IMR-90 (cell line): ENCODE measurements at regions of chr12 and their contacts with region 1.

Region 1: DNA sequence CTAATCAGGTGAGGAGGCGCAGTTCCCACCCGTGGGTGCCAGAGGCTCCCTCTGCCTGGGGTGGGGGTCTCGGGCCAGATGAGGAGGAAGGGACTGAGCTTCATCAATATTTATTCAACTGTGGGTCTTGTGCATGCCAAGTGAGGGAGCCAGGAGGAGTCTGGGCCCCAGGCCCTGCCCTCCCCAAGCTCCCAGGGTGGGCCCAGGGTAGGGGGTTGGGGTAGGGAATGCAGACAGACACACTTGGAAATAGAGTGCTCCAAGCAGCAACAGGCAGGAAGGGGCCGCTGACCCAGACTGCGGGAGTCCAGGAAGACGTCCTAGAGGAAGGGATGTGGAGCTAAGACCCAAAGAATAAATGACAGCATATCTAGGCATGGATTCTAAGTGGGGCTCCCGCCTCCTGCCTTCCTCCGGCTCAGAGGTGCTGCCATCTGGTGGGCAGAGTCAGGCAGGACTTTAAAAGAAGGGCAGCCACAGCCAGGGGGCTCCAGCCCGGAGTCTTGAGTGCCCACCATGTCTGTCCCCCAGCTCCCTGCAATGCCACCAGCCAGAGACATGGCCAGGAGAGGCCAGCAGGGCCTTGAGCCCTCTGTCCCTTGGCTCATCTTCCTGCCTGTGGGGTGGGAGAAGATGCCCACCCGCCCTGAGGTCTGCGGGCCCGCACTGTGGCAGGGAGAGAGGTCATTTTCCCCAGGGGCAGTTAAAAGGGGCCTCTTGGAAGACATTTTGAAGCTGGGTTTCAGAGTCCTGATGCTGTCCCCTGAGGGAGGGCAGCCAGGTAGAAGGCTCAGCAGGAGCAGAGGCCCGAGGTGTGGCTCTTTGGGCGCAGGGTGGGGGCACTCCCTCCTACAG is 70.1 kb downstream of the PHETA1 start:
- DNase-seq: peak; percentile 31
- ATAC-seq: peak; percentile 92
- H3K4me3 ChIP-seq: no peak overlapping the region
- H3K27ac ChIP-seq: no peak overlapping the region
- H3K4me1 ChIP-seq: no peaks in the 10 kb centered on the region
- H3K27me3 ChIP-seq: peaks cover 1% of the 10 kb centered on the region; the same call in 1 of the 2 replicates
- CTCF ChIP-seq: peak; percentile 81
- POLR2A ChIP-seq: no peak
- RAD21 ChIP-seq: peak; percentile 58

Region 2: GRCh38 chr12:110896559-110896958 is 402.2 kb before region 1 on chr12:
- CTCF ChIA-PET with region 1: interaction called, 4 read pairs
- POLR2A ChIA-PET with region 1: no interaction called
- dilution Hi-C with region 1: no loop called
- in situ Hi-C with region 1: no loop called
- intact Hi-C with region 1: loop called (anchors 5 kb)
- DNase-seq: no peak
- ATAC-seq: no peak
- H3K4me3 ChIP-seq: no peak overlapping the region
- H3K27ac ChIP-seq: no peak overlapping the region
- H3K4me1 ChIP-seq: no peaks in the 10 kb centered on the region
- H3K27me3 ChIP-seq: peaks cover 3% of the 10 kb centered on the region; the same call in 1 of the 2 replicates
- CTCF ChIP-seq: no peak
- POLR2A ChIP-seq: no peak
- RAD21 ChIP-seq: no peak

Region 3: DNA sequence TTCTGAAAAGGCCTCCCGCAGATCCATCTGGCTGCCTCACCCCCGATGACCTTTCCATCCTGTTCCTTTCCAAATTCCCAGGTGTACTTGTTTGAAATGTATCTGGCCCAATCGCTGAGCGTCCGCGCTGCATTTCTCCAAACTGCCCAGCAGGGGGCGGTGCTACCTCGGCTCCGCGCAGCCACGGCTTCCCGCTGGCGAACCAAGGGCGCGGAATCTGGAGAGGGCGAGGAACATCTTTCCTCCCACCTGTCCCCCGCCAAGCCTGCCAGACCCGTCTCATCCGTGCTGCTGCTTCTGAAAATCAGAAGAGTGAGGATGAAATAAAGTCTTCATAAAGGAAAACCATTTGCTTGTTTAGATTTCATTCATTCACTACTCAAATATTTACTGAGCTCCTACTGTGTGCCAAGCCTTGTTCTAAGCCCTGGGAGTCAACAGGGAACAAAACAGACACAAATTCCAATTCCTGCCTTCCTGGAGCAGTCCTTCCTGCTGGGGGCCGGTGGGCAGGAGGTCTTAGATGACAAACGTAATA is 361.6 kb before region 1 on chr12:
- CTCF ChIA-PET with region 1: interaction called, 3 read pairs
- POLR2A ChIA-PET with region 1: no interaction called
- dilution Hi-C with region 1: no loop called
- in situ Hi-C with region 1: no loop called
- intact Hi-C with region 1: loop called (anchors 1 kb)
- DNase-seq: peak; percentile 23
- ATAC-seq: peak; percentile 89
- H3K4me3 ChIP-seq: no peak overlapping the region
- H3K27ac ChIP-seq: no peak overlapping the region
- H3K4me1 ChIP-seq: no peaks in the 10 kb centered on the region
- H3K27me3 ChIP-seq: peaks cover 4% of the 10 kb centered on the region
- CTCF ChIP-seq: peak; percentile 78
- POLR2A ChIP-seq: no peak
- RAD21 ChIP-seq: peak; percentile 75

Region 4: DNA sequence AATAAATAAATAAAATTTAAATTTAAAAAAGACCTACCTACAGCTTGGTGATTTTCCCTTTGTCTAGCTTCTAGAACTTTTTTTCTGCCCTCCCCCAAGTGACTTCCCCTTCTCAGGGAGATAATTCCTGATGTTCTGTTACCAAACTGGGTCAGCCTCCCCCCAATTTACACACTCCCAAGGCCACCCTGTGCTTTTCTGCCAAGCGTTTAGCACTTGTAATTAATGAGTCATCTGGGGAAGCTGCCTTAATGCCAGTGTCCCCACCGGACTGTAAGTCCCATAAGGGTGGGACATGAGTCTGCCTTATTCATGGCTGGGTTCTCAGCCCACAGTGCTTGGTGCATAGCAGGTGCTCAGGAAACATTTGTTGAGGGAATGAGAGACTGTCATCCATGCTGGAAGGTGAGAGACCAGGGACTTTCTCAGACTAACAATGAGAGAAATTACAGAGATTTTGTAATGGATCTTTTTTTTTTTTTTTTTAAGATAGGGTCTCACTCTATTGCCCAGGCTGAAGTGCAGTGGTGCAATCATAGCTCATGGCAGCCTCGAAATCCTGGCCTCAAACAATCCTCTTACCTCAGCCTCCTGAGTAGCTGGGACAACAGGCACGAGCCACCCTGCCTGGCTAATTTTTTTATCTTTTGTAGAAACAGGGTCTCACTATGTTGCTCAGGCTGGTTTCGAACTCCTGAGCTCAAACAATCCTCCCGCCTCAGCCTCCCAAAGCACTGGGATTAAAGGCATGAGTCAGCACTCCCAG is 36.7 kb before region 1 on chr12:
- CTCF ChIA-PET with region 1: no interaction called
- POLR2A ChIA-PET with region 1: no interaction called
- dilution Hi-C with region 1: no loop called
- in situ Hi-C with region 1: no loop called
- intact Hi-C with region 1: no loop called
- DNase-seq: no peak
- ATAC-seq: no peak
- H3K4me3 ChIP-seq: no peak overlapping the region
- H3K27ac ChIP-seq: no peak overlapping the region
- H3K4me1 ChIP-seq: no peaks in the 10 kb centered on the region
- H3K27me3 ChIP-seq: peaks cover 1% of the 10 kb centered on the region
- CTCF ChIP-seq: no peak
- POLR2A ChIP-seq: no peak
- RAD21 ChIP-seq: no peak

Region 5: DNA sequence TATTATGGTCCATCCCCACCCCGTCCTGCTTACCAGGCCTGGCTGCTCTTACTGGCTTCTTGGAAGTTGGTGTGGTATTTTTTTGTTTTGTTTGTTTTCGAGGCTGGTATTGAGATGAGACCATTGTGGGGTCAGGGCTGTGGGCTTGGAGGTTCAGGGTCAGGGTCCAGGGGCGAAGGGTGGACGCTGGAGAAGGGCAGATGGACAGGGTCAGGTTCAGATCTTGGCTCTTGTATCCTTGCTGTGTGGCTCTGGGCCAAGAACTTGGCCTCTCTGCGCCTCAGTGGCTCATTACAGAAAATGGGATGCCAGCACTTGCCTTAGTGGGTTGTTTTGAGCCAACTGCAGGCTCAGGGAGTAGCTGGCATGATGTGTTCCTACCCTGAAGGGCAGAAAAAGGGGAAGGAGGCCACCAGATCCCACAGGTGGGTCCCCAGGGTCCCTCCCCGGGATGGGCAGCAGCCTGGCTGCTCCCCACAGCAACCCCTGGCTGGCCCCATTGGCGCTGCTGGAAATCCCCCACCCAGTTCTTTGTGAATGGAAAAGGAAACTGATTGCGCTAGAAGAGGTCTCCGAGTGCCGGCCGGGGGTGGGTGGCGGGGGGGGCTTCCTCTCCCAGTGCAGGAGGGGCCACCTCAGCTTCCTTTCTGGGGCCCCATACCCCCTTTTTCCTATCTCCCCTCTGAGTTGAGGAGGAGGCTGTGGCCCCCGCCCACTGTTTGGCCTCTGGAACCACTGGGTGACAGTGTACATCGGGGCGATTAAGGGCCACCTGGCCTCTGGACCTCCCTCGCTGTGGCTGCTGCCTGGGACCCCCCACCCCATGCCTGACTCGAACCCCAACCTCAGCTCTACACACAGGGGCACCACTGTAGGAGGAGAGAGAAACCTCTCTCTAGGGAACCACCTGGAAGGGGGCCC is 131.9 kb after region 1 on chr12:
- CTCF ChIA-PET with region 1: no interaction called
- POLR2A ChIA-PET with region 1: no interaction called
- dilution Hi-C with region 1: no loop called
- in situ Hi-C with region 1: no loop called
- intact Hi-C with region 1: no loop called
- DNase-seq: no peak
- ATAC-seq: no peak
- H3K4me3 ChIP-seq: no peak overlapping the region
- H3K27ac ChIP-seq: no peak overlapping the region
- H3K4me1 ChIP-seq: peaks cover 23% of the 10 kb centered on the region
- H3K27me3 ChIP-seq: no peaks in the 10 kb centered on the region
- CTCF ChIP-seq: no peak
- POLR2A ChIP-seq: no peak
- RAD21 ChIP-seq: no peak

Region 6: GRCh38 chr12:112018571-112019237 is 719.9 kb after region 1 on chr12:
- CTCF ChIA-PET with region 1: no interaction called
- POLR2A ChIA-PET with region 1: no interaction called
- dilution Hi-C with region 1: no loop called
- in situ Hi-C with region 1: no loop called
- intact Hi-C with region 1: no loop called
- DNase-seq: peak; percentile 92
- ATAC-seq: peak; percentile 85
- H3K4me3 ChIP-seq: no peak overlapping the region
- H3K27ac ChIP-seq: peak overlapping the region; percentile 82
- H3K4me1 ChIP-seq: peaks cover 9% of the 10 kb centered on the region
- H3K27me3 ChIP-seq: no peaks in the 10 kb centered on the region
- CTCF ChIP-seq: no peak
- POLR2A ChIP-seq: no peak
- RAD21 ChIP-seq: no peak

Region 7: DNA sequence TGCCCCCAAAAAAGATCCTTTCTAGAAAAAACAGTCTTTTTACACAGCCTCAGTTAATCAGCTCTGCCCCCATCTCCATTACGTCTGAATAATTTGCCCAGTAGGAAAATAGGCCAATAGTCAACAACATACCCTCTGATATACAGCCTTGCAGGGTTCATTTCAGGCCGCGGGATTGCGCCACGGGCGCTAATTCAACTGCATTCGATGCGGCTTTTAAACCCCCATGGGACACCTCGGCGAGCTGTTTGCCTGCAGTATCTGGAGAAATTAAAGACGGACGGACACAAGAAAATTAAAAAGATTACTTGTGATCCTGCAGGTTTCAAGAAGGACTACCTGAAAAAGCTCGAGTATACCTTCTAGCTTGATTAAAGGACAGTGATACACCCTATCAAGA is 750.5 kb after region 1 on chr12:
- CTCF ChIA-PET with region 1: no interaction called
- POLR2A ChIA-PET with region 1: no interaction called
- dilution Hi-C with region 1: no loop called
- in situ Hi-C with region 1: no loop called
- intact Hi-C with region 1: no loop called
- DNase-seq: no peak
- ATAC-seq: no peak
- H3K4me3 ChIP-seq: no peak overlapping the region
- H3K27ac ChIP-seq: no peak overlapping the region
- H3K4me1 ChIP-seq: peaks cover 5% of the 10 kb centered on the region
- H3K27me3 ChIP-seq: no peaks in the 10 kb centered on the region
- CTCF ChIP-seq: no peak
- POLR2A ChIP-seq: no peak
- RAD21 ChIP-seq: no peak